Activated CD8-positive, alpha-beta T cell treated with anti-CD3 and anti-CD28 coated beads, Interleukin-2, amount 10 ng/mL, durations not matched to agents 7 days and 5 days (primary cell): ENCODE measurements at regions of chr1 and their contacts with region 1.

Region 1: GRCh38 chr1:175154629-175155472 is 37.7 kb downstream of the KIAA0040 start:
- DNase-seq: peak; percentile 79
- ATAC-seq: peak; percentile 71
- H3K4me3 Mint-ChIP-seq: no peak overlapping the region
- H3K27ac Mint-ChIP-seq: no peak overlapping the region
- H3K4me1 Mint-ChIP-seq: peaks cover 10% of the 10 kb centered on the region
- H3K27me3 Mint-ChIP-seq: peaks cover 23% of the 10 kb centered on the region

Region 2: DNA sequence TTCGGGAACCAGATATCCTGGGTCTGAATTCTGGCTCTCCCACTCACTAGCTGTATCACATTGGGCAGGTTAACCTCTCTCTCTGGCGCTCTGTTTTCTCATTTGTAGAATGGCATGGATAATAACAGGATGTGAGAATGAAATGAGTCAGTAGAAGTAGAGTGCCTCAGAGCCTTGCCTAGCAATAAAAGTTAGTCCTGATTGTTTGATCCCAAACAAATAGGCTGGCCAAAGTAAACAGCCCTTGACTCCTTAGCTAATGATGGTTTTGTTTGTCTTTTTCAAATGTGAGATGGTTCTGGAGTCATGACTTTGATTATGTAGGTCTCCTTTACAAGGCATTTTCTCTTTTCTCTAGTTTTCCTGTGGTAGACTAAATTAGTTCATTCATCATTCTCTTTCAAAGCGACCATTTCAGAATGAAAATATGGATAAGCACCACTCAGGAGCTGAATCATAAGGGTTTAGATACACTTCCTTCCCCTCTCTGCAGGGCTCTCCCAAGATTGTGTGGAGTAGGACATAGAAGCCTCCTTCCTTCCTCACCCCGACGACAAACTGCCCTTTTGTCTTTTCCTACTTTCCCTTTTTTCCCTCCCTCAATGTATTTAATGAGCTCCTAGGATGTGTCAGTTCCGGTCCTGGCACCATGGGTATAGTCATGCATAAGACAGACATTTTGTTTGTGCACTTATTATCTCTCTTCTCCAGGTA is 14.6 kb after region 1 on chr1:
- CTCF ChIA-PET with region 1: interaction called, 17 read pairs
- POLR2A ChIA-PET with region 1: interaction called, 3 read pairs
- DNase-seq: no peak
- ATAC-seq: no peak
- H3K4me3 Mint-ChIP-seq: no peak overlapping the region
- H3K27ac Mint-ChIP-seq: peak overlapping the region; percentile 44
- H3K4me1 Mint-ChIP-seq: peaks cover 46% of the 10 kb centered on the region
- H3K27me3 Mint-ChIP-seq: no peaks in the 10 kb centered on the region

Region 3: GRCh38 chr1:175192630-175193526 is 38.0 kb after region 1 on chr1 and contains the start of gene KIAA0040:
- CTCF ChIA-PET with region 1: interaction called, 78 read pairs
- POLR2A ChIA-PET with region 1: interaction called, 4 read pairs
- DNase-seq: peak; percentile 61
- ATAC-seq: peak; percentile 73
- H3K4me3 Mint-ChIP-seq: peak within 1 kb of the TSS; percentile 91
- H3K27ac Mint-ChIP-seq: peak within 1 kb of the TSS; percentile 87
- H3K4me1 Mint-ChIP-seq: peaks cover 64% of the 10 kb centered on the region
- H3K27me3 Mint-ChIP-seq: no peaks in the 10 kb centered on the region
- total RNA-seq, gene KIAA0040: 50.8 to 51.0 TPM

Region 4: DNA sequence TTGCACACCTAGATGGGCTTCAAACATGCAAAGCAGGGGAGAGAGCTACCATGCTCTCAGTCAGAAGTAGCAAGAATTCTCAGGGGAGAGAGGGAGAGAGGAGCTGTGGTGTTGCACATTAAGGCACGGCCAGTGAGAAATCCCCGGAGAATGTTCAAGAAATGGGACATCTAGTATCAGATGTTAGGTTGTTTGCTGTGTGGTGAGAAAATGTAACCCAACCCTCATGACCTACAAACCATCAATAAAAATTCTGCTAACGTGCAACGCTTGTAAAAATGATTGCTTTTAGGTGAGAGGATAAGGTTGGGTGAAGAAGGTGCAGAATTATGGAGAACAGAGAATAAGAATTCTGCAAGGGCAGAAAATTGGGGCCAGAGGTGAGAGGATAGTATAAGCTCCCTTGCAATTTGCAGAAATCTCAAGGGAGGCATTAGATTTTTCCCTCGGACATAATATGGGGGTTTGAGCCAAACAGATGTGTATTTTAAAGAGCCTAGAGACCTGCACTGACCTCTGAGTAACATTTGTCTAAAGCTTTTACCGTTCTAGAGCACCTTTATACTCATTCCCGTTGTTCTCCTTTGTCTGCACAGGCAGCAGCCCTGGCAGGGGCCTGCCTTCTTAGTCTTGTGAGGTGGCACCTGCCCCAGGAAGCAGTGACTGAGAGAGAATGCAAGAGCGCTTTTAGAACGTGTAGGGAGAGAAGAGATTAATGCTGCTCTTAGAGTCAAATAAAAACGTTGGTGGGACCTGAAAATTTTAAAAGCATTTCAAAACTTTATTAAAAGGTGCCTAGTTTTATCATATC is 63.1 kb after region 1 on chr1:
- CTCF ChIA-PET with region 1: interaction called, 18 read pairs
- POLR2A ChIA-PET with region 1: no interaction called
- DNase-seq: no peak
- ATAC-seq: no peak
- H3K4me3 Mint-ChIP-seq: no peak overlapping the region
- H3K27ac Mint-ChIP-seq: no peak overlapping the region
- H3K4me1 Mint-ChIP-seq: peaks cover 14% of the 10 kb centered on the region
- H3K27me3 Mint-ChIP-seq: no peaks in the 10 kb centered on the region

Region 5: DNA sequence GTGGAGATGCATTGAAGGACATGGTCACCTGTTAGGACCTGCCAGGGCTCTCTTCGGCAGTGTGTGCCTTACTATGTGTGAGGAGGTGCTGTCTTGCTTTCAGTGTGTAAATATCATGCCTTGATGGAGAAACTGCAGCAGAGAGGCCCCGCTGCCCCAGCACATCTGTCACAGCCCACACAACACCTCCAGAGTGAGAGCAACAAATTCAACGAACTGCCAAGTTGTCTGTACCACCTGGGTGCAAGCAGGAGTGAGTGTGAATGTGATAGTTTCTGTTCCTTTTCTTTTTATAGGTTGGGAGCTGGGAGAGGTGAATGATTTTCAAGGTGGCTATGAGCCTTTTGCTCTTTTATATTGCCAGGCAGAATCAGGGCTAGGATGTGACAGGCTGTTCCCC is 152.3 kb after region 1 on chr1:
- CTCF ChIA-PET with region 1: interaction called, 411 read pairs
- POLR2A ChIA-PET with region 1: no interaction called
- DNase-seq: no peak
- ATAC-seq: no peak
- H3K4me3 Mint-ChIP-seq: no peak overlapping the region
- H3K27ac Mint-ChIP-seq: no peak overlapping the region
- H3K4me1 Mint-ChIP-seq: no peaks in the 10 kb centered on the region
- H3K27me3 Mint-ChIP-seq: peaks cover 21% of the 10 kb centered on the region

Region 6: GRCh38 chr1:175331891-175332290 is 177.0 kb after region 1 on chr1:
- CTCF ChIA-PET with region 1: interaction called, 19 read pairs
- POLR2A ChIA-PET with region 1: no interaction called
- DNase-seq: no peak
- ATAC-seq: no peak
- H3K4me3 Mint-ChIP-seq: no peak overlapping the region
- H3K27ac Mint-ChIP-seq: no peak overlapping the region
- H3K4me1 Mint-ChIP-seq: no peaks in the 10 kb centered on the region
- H3K27me3 Mint-ChIP-seq: peaks cover 19% of the 10 kb centered on the region

Region 7: GRCh38 chr1:175434283-175434860 is 279.5 kb after region 1 on chr1:
- CTCF ChIA-PET with region 1: interaction called, 11 read pairs
- POLR2A ChIA-PET with region 1: no interaction called
- DNase-seq: no peak
- ATAC-seq: no peak
- H3K4me3 Mint-ChIP-seq: no peak overlapping the region
- H3K27ac Mint-ChIP-seq: peak overlapping the region; percentile 12
- H3K4me1 Mint-ChIP-seq: no peaks in the 10 kb centered on the region
- H3K27me3 Mint-ChIP-seq: peaks cover 10% of the 10 kb centered on the region